CD14-positive monocyte (primary cell): ENCODE measurements at regions of chr1 and their contacts with region 1.

Region 1: DNA sequence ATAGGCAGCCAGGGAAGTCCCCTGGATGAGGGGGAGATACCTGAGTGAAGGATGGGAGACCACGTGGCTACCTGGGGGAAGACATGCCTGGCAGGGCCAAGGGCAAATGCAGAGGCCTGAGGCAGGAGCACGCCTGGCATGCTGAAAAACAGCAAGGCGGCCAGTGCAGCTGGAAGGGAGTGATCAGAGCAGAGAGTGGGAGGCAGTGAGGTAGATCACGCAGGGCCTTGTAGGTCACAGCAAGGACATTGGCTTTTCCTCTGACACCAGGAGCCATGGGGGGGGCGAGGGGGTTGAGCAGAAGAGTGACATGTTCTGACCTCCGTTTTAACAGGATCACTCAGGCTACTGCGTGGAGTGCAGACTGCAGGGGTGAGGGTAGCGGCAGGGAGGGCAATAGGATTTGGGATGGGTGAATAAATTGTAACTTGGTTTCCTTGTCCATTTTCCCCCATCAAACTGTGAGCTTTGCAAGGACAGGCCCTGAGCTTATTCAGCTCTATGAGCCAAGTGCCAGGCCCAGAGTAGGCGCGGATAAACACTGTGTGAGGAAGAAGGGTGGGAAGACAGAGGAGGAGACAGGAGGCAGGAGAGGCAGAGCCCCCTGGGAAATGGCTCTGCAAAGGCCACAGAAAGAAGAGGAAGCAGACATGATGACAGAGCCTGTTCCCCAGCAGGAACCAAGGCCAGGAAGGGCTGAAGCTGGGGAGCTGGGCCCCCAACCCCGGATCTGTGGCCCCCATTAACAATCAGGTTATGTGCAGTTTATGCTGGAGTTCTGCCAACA is 16.6 kb downstream of the IFI6 start:
- DNase-seq: peak in 2 of 3 donors; percentile 40 to 46
- H3K4me3 ChIP-seq: no peak overlapping the region
- H3K4me3 Mint-ChIP-seq: no peak overlapping the region
- H3K27ac ChIP-seq: peak overlapping the region; percentile 53 to 71
- H3K27ac Mint-ChIP-seq: peak overlapping the region; percentile 69 to 94 (median 89)
- H3K4me1 ChIP-seq: peaks cover 60 to 68% of the 10 kb centered on the region in 2 donors
- H3K4me1 Mint-ChIP-seq: peaks cover 60% of the 10 kb centered on the region
- H3K27me3 ChIP-seq: no peaks in the 10 kb centered on the region
- H3K27me3 Mint-ChIP-seq: peaks cover 0 to 3% (median 0%) of the 10 kb centered on the region in 3 donors
- CTCF ChIP-seq: no peak

Region 2: GRCh38 chr1:27643701-27644625 is 11.4 kb before region 1 on chr1:
- intact Hi-C with region 1: loop called in 1 of 2 experiments (anchors 2 kb)
- DNase-seq: peak; percentile 62 to 74 (median 65)
- H3K4me3 ChIP-seq: no peak overlapping the region
- H3K4me3 Mint-ChIP-seq: no peak overlapping the region
- H3K27ac ChIP-seq: no peak overlapping the region
- H3K27ac Mint-ChIP-seq: peak overlapping the region in 4 of 7 donors; percentile 66 to 82 (median 71)
- H3K4me1 ChIP-seq: peaks cover 22 to 32% of the 10 kb centered on the region in 2 donors
- H3K4me1 Mint-ChIP-seq: peaks cover 32% of the 10 kb centered on the region
- H3K27me3 ChIP-seq: no peaks in the 10 kb centered on the region
- H3K27me3 Mint-ChIP-seq: peaks cover 0 to 3% (median 2%) of the 10 kb centered on the region in 3 donors
- CTCF ChIP-seq: peak; percentile 74

Region 3: DNA sequence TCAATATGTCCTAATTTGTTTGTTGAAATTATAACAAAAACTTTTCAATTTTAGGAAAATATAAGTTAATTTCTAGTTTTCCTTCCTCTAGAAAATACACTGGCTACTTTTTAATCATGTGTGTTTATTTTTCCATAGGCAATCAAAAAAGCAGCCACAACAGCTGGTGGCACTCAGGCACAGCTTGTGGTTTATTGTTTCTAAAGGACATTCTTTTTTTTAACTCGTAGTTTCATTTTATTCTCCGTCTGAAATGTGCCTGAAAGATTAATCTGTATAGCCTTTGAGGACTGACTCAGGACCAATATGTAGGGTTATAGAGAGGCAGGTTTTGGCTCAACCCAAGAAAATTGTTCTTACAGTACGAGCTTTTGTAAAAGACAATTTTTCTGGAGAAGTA is 97.0 kb after region 1 on chr1:
- intact Hi-C with region 1: no loop called
- DNase-seq: no peak
- H3K4me3 ChIP-seq: no peak overlapping the region
- H3K4me3 Mint-ChIP-seq: no peak overlapping the region
- H3K27ac ChIP-seq: no peak overlapping the region
- H3K27ac Mint-ChIP-seq: no peak overlapping the region
- H3K4me1 ChIP-seq: no peaks in the 10 kb centered on the region
- H3K4me1 Mint-ChIP-seq: peaks cover 4% of the 10 kb centered on the region
- H3K27me3 ChIP-seq: no peaks in the 10 kb centered on the region
- H3K27me3 Mint-ChIP-seq: no peaks in the 10 kb centered on the region
- CTCF ChIP-seq: no peak

Region 4: DNA sequence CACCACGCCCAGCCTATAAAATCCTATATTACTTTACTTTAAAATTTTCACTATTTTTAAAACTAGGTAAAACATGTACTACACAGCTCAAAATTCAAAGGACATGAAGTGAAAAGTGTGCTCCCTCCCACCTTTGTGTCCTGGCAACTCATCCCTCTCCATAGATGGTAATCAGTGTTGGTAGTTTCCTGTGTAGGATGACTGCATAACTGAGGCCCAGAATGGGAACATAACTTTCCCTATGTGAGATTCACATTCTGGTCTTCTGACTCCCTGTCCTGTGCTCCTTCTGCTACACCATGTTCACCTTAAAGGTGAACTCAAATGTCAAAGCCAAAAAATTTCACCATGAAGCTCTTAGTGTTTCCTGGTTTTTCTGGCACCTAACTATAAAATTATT is 343.7 kb after region 1 on chr1:
- intact Hi-C with region 1: no loop called
- DNase-seq: no peak
- H3K4me3 ChIP-seq: no peak overlapping the region
- H3K4me3 Mint-ChIP-seq: no peak overlapping the region
- H3K27ac ChIP-seq: no peak overlapping the region
- H3K27ac Mint-ChIP-seq: no peak overlapping the region
- H3K4me1 ChIP-seq: peaks cover 0 to 7% of the 10 kb centered on the region in 2 donors
- H3K4me1 Mint-ChIP-seq: peaks cover 4% of the 10 kb centered on the region
- H3K27me3 ChIP-seq: no peaks in the 10 kb centered on the region
- H3K27me3 Mint-ChIP-seq: no peaks in the 10 kb centered on the region
- CTCF ChIP-seq: no peak